GM13976 (cell line): ENCODE measurements at regions of chr6 and their contacts with region 1.

Region 1: GRCh38 chr6:72619883-72620696 is 1.8 kb upstream of the KCNQ5 start:
- DNase-seq: peak; percentile 79
- CTCF ChIP-seq: no peak

Region 2: GRCh38 chr6:73129653-73130443 is 509.8 kb after region 1 on chr6:
- in situ Hi-C with region 1: loop called (anchors 10 kb)
- DNase-seq: peak; percentile 68
- CTCF ChIP-seq: peak; percentile 94